HEK293 (cell line): ENCODE measurements at regions of chr6 and their contacts with region 1.

Region 1: DNA sequence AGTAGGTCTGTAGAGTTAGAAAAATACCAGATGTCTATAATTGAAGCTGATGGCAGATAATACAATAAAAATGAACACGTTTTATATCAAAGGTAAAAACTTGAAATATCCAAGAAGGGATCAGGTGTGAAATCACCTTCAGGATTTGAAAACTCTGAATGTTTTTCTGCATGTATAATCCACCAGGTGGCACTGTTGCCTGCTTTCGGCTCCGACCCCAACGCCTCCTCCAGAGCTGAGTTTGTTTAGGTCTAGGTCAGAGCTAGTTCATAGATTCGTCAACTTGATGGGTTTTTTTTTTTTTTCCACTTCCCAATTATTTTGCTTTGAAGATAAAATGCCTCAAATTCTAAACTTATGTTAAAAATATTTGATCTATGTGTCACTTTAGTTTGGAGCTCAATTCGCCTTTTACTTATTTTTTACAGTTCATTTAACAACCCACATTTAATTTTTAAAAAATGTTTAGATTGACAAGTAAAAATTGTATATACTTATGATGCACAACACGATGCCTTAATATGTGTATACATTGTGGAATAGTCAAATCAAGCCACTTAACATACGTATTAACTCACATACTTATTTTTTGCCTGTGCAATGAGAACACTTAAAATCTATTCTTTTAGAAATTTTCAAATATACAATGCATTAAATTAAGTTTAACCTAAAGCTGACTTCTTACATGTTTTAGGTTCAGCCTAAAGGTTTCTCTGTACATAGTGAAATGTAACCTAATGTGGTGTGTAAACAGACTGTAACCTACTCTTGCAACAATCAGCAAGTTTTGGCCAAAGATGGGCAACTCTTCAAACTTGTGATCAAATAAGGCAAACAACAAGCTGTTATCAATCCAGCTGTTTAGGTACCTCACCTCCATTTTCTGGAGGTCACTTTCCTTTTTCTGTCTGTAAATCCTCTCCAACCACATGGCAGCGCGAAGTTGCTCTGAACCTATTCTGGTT is 39.4 kb upstream of the ENPP4 start:
- H3K4me3 ChIP-seq: no peak overlapping the region
- H3K27ac ChIP-seq: no peak overlapping the region
- H3K4me1 ChIP-seq: no peaks in the 10 kb centered on the region
- CTCF ChIP-seq: peak; percentile 34; the same call in 1 of the 2 replicates

Region 2: DNA sequence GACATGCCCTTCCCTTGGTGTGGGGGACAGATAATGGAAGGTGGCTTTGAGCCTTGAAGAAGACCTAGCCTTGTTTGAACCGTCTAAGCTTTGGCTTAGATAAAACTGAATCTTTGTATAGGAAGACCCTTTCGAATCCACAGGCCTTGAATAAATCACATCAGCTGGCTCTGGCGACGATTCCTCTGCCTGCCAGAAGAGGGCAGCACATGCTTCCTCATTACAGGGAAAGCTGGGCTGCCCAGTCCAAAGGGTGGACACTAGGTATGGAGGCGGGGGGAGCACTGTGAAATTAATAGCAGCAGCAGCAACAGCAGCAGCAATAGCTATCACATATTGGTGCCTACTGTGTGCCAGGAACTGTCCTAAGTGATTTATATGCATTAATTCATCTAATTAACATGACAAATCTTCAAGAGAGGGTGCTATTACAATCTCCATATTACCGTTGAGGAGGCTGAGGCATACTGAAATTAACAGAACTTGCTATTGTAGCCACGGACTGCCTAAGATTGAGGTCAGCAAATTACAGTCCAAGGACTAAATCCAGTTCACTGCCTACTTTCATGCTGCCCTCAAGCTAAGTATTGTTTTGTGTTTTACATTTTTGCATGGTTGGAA is 159.9 kb before region 1 on chr6:
- CTCF ChIA-PET with region 1: interaction called, 20 read pairs
- POLR2A ChIA-PET with region 1: no interaction called
- H3K4me3 ChIP-seq: no peak overlapping the region
- H3K27ac ChIP-seq: no peak overlapping the region
- H3K4me1 ChIP-seq: peaks cover 7% of the 10 kb centered on the region; the same call in 1 of the 2 replicates
- CTCF ChIP-seq: peak; percentile 80

Region 3: DNA sequence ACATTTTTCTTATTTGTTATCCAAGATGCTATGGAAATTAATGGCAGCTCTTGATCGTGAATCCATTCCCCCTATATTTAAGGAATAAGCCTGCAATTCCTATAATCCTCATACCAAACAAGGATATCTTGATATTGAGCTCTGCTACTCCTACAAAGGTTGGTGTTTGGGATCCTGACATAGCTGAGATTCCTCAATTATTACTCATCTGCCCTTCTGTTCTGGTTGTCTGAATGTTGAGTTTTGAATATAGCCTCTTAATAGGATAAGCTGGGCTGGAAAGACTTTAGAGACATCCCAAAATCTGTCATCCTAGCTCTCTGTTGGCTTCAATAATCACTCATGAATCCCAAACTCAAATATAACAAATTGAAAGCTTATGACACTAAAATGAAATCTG is 124.6 kb before region 1 on chr6:
- CTCF ChIA-PET with region 1: no interaction called
- POLR2A ChIA-PET with region 1: no interaction called
- H3K4me3 ChIP-seq: no peak overlapping the region
- H3K27ac ChIP-seq: no peak overlapping the region
- H3K4me1 ChIP-seq: no peaks in the 10 kb centered on the region
- CTCF ChIP-seq: no peak

Region 4: DNA sequence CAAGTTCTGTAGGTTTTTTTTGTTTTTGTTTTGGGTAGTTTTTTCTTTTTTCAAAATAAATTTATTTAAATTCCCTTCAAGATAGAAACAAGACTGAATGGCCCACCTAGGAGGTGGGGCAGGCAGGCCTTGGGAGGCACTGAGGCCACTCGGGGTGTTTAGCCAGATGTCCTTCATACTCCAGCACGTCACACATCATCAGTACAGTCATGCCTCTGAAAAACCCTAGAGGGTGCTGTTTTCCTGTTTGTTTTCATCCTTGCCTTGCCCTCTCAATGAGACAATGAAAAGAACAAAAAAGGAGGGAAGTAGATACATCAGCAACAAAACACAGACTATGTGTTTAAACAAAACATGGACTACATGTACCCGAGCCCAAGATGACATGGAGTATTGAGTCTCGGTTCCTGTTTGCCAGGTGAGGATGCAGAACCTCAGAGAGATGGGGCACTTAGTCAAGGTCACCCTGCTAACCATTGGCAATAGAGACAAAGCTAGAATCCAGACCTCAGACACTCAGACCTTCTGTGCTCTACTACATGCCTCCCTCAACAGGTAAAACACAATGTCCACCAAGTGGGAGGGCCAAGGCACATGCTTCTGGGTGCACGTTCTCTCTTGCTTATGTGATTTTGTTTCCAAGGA is 47.9 kb before region 1 on chr6:
- CTCF ChIA-PET with region 1: interaction called, 14 read pairs
- POLR2A ChIA-PET with region 1: no interaction called
- H3K4me3 ChIP-seq: no peak overlapping the region
- H3K27ac ChIP-seq: no peak overlapping the region
- H3K4me1 ChIP-seq: peaks cover 7% of the 10 kb centered on the region
- CTCF ChIP-seq: peak; percentile 63

Region 5: DNA sequence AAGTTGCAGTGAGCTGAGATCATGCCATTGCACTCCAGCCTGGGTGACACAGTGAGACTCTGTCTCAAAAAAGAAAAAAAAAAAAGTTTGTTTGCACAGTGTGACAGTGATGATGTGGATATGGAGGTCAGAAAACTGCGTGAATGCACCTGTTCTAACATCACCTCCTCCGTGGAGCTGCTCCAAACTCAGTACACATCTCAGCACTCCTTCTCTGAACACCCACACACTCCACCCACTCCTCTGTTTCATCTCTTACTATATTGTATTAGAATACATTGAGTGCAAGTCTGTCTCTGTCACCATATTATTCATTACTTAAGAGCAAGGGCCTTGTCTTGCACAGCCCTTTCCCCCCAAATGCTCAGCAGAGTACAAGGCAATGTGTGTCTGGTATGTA is 12.1 kb before region 1 on chr6:
- CTCF ChIA-PET with region 1: interaction called, 15 read pairs
- POLR2A ChIA-PET with region 1: no interaction called
- H3K4me3 ChIP-seq: no peak overlapping the region
- H3K27ac ChIP-seq: no peak overlapping the region
- H3K4me1 ChIP-seq: peaks cover 3% of the 10 kb centered on the region; the same call in 1 of the 2 replicates
- CTCF ChIP-seq: no peak

Region 6: GRCh38 chr6:46103440-46104115 is 13.2 kb after region 1 on chr6:
- CTCF ChIA-PET with region 1: interaction called, 12 read pairs
- POLR2A ChIA-PET with region 1: no interaction called
- H3K4me3 ChIP-seq: no peak overlapping the region
- H3K27ac ChIP-seq: no peak overlapping the region
- H3K4me1 ChIP-seq: no peaks in the 10 kb centered on the region; the same call in 1 of the 2 replicates
- CTCF ChIP-seq: no peak

Region 7: DNA sequence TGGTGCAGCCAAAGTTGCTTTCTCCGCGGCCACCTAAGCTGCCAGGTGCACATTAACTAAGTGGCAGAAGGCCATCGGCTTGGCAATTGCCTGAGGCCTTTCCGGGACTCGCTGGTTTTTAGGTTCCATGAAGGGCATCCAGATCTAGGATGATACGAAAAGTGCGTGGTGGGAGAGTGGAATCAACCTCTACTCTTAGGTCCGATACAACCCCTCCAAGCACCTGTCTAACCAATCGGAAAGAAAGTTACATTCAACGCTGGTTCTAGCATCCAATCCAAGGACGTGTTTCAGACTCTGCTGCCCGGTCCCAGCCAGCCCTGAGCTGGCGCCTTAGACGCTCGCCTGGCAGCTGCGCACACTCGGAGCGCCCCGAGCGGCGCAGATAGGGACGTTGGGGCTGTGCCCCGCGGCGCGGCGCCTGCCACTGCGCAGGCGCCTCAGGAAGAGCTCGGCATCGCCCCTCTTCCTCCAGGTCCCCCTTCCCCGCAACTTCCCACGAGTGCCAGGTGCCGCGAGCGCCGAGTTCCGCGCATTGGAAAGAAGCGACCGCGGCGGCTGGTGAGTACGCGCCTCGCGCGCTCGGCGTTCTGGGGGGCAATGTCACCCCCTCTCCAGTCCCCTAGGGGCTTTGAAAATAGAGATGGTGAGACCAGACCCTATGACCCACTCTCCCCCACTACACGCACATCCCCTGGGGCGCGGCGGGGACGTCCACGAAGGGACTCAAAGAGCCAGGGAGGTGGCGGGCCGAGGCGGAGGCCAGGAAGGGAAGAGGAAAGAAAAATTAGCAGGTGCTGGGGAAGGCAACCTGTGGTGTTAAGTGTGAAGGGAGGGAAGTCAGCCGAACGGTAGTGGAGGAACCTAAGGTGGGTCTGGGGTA is 39.5 kb after region 1 on chr6 and contains the start of gene ENPP4:
- CTCF ChIA-PET with region 1: interaction called, 14 read pairs
- POLR2A ChIA-PET with region 1: no interaction called
- H3K4me3 ChIP-seq: peak within 1 kb of the TSS; percentile 88
- H3K27ac ChIP-seq: peak within 1 kb of the TSS; percentile 46; the same call in 1 of the 2 replicates
- H3K4me1 ChIP-seq: no peaks in the 10 kb centered on the region
- CTCF ChIP-seq: no peak

Region 8: GRCh38 chr6:46221222-46221793 is 130.9 kb after region 1 on chr6:
- CTCF ChIA-PET with region 1: interaction called, 50 read pairs
- POLR2A ChIA-PET with region 1: no interaction called
- H3K4me3 ChIP-seq: no peak overlapping the region
- H3K27ac ChIP-seq: no peak overlapping the region
- H3K4me1 ChIP-seq: no peaks in the 10 kb centered on the region
- CTCF ChIP-seq: peak; percentile 65; the same call in 1 of the 2 replicates